Sciatic nerve (tissue), 2 donors: ENCODE measurements at regions of chr10 and their contacts with region 1.

Region 1: DNA sequence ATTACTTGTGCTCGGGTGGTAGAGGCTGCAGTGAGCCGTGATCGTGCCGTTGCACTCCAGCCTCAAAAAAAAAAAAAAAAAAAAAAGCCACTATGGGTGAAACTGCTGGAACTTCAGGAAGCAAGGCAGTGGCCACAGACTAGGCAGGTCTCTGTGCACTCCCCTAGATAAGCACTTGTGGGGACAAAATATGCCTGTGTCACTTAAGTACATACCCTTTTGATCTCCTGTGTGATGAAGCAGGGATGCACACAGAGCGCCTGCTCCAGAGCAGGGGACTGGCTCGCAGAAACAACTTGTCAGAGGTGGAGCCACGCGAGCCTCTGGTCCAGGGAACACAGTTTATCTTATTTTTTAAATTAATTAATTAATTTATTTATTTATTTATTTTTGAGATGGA is 42.9 kb upstream of the PSAP start:
- DNase-seq: no peak
- ATAC-seq: no peak

Region 2: DNA sequence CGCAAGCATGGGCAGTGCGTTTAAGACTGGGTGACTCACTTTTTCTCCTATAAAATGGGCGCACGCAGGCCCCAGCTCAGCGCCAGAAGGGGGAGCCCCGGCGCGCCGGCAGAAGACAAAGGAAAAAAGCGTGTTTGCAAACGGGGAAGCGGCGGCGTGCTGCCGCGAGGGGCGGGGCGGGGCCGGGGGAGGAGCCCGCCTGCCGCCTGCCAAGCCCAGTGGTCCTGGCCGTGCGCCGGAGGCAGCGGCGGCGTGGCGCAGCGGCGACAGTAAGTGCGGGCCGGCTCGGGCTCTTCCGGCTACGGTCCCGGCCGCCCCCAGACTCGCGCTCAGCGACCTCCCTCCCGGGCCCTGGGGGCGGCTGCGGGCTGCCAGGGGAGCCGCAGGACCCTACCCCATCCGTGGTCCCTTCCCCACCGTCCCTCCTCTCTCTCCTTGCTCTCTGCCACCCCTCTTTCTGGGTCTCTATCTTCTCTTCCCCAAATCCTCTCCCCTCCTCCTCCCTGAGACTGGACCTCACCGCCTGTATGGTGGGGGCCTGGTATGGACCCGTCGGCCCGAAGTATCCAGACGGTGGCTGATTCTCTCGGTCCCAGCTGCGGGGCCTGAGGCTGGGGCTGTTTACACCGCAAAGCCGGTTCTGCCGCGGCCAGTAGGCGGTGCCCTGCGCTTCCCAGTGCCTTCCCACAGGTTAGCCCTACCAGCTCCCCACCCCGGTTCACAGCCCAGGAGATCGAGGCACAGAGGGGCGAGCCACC is 574.7 kb before region 1 on chr10 and contains the start of gene SLC29A3:
- intact Hi-C with region 1: loop called (anchors 10 kb)
- DNase-seq: peak; percentile 89
- ATAC-seq: peak; percentile 88
- total RNA-seq, gene SLC29A3: 8.7 TPM

Region 3: DNA sequence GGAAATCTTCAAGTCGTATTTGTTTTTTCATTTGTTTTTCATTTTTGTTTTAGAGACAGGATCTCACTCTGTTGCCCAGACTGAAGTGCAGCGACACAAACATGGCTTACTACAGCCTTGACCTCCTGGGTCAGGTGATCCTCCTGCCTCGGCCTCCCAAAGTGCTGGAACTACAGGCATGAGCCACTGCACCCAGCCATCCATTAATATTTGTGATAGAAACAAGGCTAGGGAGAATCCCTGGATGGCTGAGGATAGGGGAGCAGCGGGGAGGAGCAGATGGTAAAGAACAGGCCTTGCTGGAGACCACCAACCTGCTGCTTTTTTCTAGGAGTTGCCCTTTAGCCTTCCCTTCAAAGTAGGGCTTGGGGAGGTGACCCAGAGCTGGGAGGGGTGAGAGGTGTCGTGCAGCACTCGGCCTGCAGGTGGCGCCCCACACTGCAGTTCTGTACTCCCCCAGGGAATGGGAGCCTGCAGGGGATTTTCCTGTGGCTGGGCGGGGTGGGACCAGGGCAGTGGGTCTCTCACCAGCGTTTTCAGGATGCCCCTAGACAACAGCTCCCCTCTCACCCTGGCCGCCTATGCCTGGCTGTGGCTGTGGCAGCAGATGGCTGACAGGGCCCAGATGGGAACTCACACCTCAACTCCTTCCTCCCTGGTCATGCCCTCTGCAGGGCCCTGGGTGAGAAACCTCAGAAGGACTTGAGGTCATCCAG is 509.8 kb before region 1 on chr10:
- intact Hi-C with region 1: loop called (anchors 10 kb)
- DNase-seq: peak; percentile 85
- ATAC-seq: peak; percentile 89

Region 4: GRCh38 chr10:71684356-71685173 is 209.4 kb before region 1 on chr10:
- intact Hi-C with region 1: no loop called
- DNase-seq: no peak
- ATAC-seq: no peak